ENCODE measurements at regions of chr10 and their contacts with region 1.

Region 1: DNA sequence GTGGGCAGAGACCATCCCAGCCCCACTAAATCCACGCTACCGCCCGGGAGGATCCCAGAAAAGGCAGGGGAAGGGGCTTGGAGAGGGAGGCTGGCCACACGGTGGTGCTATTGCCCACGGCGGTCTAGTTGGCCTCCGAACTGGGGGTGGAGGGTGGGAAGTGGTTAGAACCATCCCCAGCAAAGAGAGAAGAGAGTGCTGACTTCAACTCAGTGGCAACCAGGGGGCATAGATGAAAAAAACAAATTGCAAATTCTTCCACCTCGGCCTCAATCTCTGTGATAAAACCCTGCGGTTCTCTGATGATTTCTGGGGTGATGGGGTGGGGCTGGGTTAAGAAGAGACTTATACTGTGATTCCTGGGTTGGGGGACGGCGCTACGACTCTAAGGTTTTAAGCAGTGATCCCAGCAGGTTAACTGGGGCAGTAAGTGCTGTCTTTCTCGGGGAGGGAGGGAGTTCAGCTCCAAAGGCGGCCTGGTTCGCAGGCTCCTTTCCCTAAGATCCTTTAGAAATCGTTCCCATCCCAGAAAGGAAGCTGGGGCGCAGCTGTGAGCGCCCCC is 154.5 kb upstream of the LYZL2 start:
- DNase-seq: peak; percentile 64 to 93 (median 87)
- ATAC-seq: peak; percentile 88
- H3K4me3 ChIP-seq: peak overlapping the region; percentile 55 to 80
- H3K4me3 Mint-ChIP-seq: peak overlapping the region; percentile 84
- H3K27ac ChIP-seq: peak overlapping the region; percentile 64 to 73
- H3K27ac Mint-ChIP-seq: peak overlapping the region; percentile 93
- H3K4me1 ChIP-seq: peaks cover 3% of the 10 kb centered on the region
- H3K4me1 Mint-ChIP-seq: peaks cover 27% of the 10 kb centered on the region
- H3K27me3 ChIP-seq: no peaks in the 10 kb centered on the region
- H3K27me3 Mint-ChIP-seq: no peaks in the 10 kb centered on the region
- CTCF ChIP-seq: peak; percentile 85

Region 2: GRCh38 chr10:30510169-30510930 is 273.7 kb before region 1 on chr10:
- CTCF ChIA-PET with region 1: no interaction called
- POLR2A ChIA-PET with region 1: no interaction called
- intact Hi-C with region 1: no loop called
- DNase-seq: peak in 2 of 9 experiments; percentile 52 to 53
- ATAC-seq: peak; percentile 51
- H3K4me3 ChIP-seq: no peak overlapping the region
- H3K4me3 Mint-ChIP-seq: no peak overlapping the region
- H3K27ac ChIP-seq: no peak overlapping the region
- H3K27ac Mint-ChIP-seq: no peak overlapping the region
- H3K4me1 ChIP-seq: no peaks in the 10 kb centered on the region
- H3K4me1 Mint-ChIP-seq: peaks cover 13% of the 10 kb centered on the region
- H3K27me3 ChIP-seq: no peaks in the 10 kb centered on the region
- H3K27me3 Mint-ChIP-seq: no peaks in the 10 kb centered on the region
- CTCF ChIP-seq: no peak

Region 3: DNA sequence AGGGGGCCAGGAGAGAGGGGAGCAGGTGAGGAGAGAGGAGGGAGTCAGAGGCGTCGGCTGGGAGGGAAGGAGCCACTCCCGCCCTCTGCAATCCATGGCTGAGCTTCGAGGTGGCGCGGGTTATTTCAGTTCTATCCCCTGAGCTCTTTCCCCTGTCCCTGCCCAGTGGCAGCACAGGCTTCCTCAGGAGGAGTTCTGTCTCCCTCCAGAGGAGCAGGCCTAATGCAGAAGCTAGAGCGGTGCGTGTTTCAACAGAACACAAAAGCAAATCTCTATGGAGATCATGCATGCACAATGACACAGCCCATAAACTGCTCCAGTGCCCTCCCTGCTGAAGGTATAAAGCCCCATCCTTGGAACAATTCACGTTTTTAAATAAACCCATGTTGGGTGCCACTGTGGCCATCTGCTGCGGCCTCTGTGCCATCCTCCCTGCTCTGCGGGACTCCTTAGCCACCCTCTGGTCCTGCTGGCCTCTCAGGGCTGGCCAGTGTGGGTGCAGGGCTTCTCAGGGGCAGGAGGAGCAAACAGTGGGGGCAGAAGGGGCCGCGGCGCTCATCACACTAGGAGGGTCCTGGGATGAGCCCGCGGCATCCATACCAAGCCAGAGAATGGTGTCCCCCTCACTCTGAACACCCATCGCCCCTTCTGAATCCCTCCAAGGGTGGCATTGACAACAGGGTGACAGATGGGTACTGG is 38.1 kb after region 1 on chr10:
- CTCF ChIA-PET with region 1: interaction called, 4 read pairs
- POLR2A ChIA-PET with region 1: no interaction called
- intact Hi-C with region 1: loop called in 1 of 2 experiments (anchors 1 kb)
- DNase-seq: no peak
- ATAC-seq: no peak
- H3K4me3 ChIP-seq: no peak overlapping the region
- H3K4me3 Mint-ChIP-seq: no peak overlapping the region
- H3K27ac ChIP-seq: no peak overlapping the region
- H3K27ac Mint-ChIP-seq: no peak overlapping the region
- H3K4me1 ChIP-seq: no peaks in the 10 kb centered on the region
- H3K4me1 Mint-ChIP-seq: peaks cover 3% of the 10 kb centered on the region
- H3K27me3 ChIP-seq: no peaks in the 10 kb centered on the region
- H3K27me3 Mint-ChIP-seq: peaks cover 7% of the 10 kb centered on the region
- CTCF ChIP-seq: no peak

Region 4: DNA sequence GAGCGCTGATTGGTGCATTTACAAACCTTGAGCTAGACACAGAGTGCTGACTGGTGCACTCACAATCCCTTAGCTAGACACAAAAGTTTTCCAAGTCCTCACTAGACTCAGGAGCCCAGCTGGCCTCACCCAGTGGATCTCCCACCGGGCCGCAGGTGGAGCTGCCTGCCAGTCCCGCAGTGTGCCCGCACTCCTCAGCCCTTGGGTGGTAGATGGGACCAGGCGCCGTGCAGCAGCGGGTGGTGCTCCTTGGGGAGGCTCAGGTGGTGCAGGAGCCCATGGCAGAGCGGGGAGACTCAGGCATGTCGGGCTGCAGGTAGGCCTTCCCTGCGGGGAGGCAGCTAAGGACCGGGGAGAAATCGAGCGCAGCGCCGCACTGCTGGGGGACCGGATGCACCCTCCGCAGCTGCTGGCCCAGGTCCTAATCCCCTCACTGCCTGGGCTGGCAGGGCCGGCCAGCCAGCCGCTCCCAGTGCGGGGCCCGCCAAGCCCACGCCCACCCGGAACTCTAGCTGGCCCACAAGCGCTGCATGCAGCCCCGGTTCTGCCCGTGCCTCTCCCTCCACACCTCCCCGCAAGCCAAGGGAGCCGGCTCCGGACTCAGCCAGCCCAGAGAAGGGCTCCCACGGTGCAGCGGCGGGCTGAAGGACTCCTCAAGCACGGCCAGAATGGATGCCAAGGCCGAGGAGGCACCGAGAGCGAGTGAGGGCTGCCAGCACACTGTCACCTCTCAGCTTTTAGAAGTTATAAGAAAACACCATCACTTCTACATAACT is 118.8 kb after region 1 on chr10:
- CTCF ChIA-PET with region 1: no interaction called
- POLR2A ChIA-PET with region 1: no interaction called
- intact Hi-C with region 1: no loop called
- DNase-seq: no peak
- ATAC-seq: no peak
- H3K4me3 ChIP-seq: no peak overlapping the region
- H3K4me3 Mint-ChIP-seq: no peak overlapping the region
- H3K27ac ChIP-seq: no peak overlapping the region
- H3K27ac Mint-ChIP-seq: no peak overlapping the region
- H3K4me1 ChIP-seq: no peaks in the 10 kb centered on the region
- H3K4me1 Mint-ChIP-seq: no peaks in the 10 kb centered on the region
- H3K27me3 ChIP-seq: no peaks in the 10 kb centered on the region
- H3K27me3 Mint-ChIP-seq: no peaks in the 10 kb centered on the region
- CTCF ChIP-seq: no peak

Region 5: GRCh38 chr10:31083765-31084184 is 299.8 kb after region 1 on chr10:
- CTCF ChIA-PET with region 1: interaction called, 15 read pairs
- POLR2A ChIA-PET with region 1: no interaction called
- intact Hi-C with region 1: loop called (anchors 1 to 2 kb)
- DNase-seq: peak; percentile 19 to 73 (median 50)
- ATAC-seq: peak; percentile 75
- H3K4me3 ChIP-seq: no peak overlapping the region
- H3K4me3 Mint-ChIP-seq: no peak overlapping the region
- H3K27ac ChIP-seq: no peak overlapping the region
- H3K27ac Mint-ChIP-seq: no peak overlapping the region
- H3K4me1 ChIP-seq: no peaks in the 10 kb centered on the region
- H3K4me1 Mint-ChIP-seq: peaks cover 4% of the 10 kb centered on the region
- H3K27me3 ChIP-seq: no peaks in the 10 kb centered on the region
- H3K27me3 Mint-ChIP-seq: no peaks in the 10 kb centered on the region
- CTCF ChIP-seq: no peak

Region 6: DNA sequence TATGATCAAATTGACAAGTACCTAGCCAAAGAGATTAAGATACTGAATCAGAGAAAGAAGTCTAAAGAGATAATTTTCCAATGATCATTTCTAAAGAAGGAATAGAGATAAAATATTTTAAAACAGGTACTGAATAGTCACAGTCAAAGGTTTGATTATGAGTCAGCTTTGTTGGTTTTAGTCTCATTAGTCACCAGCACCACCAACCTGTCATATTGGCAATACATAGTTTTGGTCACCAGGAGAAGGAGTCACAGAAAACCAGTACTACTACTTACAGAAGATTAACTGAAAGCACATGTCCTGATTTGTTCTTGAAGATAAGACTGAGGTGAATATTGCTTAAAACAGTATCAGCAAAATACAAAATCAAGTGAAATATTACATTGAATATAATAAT is 569.6 kb after region 1 on chr10:
- CTCF ChIA-PET with region 1: no interaction called
- POLR2A ChIA-PET with region 1: no interaction called
- intact Hi-C with region 1: loop called in 1 of 2 experiments (anchors 1 kb)
- DNase-seq: peak in 3 of 9 experiments; percentile 31 to 53 (median 39)
- ATAC-seq: peak; percentile 87
- H3K4me3 ChIP-seq: no peak overlapping the region
- H3K4me3 Mint-ChIP-seq: no peak overlapping the region
- H3K27ac ChIP-seq: no peak overlapping the region
- H3K27ac Mint-ChIP-seq: no peak overlapping the region
- H3K4me1 ChIP-seq: peaks cover 9% of the 10 kb centered on the region
- H3K4me1 Mint-ChIP-seq: peaks cover 63% of the 10 kb centered on the region
- H3K27me3 ChIP-seq: no peaks in the 10 kb centered on the region
- H3K27me3 Mint-ChIP-seq: no peaks in the 10 kb centered on the region
- CTCF ChIP-seq: no peak

Region 7: DNA sequence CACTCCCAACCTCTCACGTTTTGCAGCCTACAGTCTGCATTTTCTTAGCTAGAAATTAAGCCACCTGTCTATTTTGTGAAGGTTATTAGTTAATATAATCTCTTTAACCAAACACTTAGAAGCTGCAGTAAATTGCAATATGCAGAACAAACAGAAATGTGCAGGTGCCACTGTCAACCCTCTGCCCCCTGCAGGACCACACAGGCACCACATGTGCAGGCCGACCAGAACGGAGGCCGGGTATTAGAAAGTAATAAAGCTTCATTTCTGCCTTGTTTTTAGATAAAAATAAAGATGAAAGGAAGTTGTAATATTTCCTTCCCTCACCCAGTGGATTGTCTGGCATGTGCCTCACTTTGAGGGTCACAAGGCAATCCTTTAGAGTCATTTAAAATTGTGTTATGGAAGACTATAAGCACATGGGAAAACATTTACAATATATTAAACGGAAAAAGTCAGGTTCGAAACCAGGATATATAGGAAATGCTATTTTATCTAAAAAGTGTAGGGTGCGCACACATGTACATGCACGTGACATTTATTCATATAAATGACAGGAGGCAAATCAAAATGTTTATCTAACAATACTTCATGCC is 986.4 kb after region 1 on chr10:
- CTCF ChIA-PET with region 1: interaction called, 27 read pairs
- POLR2A ChIA-PET with region 1: interaction called, 3 read pairs
- intact Hi-C with region 1: loop called (anchors 1 to 2 kb)
- DNase-seq: peak; percentile 43 to 74 (median 62)
- ATAC-seq: peak; percentile 97
- H3K4me3 ChIP-seq: no peak overlapping the region
- H3K4me3 Mint-ChIP-seq: no peak overlapping the region
- H3K27ac ChIP-seq: no peak overlapping the region
- H3K27ac Mint-ChIP-seq: no peak overlapping the region
- H3K4me1 ChIP-seq: no peaks in the 10 kb centered on the region
- H3K4me1 Mint-ChIP-seq: no peaks in the 10 kb centered on the region
- H3K27me3 ChIP-seq: no peaks in the 10 kb centered on the region
- H3K27me3 Mint-ChIP-seq: no peaks in the 10 kb centered on the region
- CTCF ChIP-seq: peak; percentile 89

Region 8: DNA sequence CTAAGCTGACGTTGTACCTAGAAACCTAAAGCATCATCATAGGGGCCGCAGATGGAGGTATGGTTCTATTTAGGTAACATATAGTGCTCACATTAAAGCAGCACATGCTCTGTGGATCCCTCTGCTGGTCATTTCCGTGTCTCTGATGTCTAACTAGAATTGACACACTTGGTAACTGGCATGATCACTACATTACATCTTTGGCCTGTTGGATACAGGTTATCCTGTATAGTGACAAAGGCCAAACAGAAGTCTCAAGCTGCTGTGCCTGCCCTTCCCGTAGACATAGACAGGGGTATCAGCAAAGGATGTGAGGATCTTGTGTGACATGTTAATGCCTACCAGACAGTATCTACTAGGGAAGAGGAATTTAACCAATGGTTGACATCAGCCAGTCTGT is 1221.0 kb after region 1 on chr10:
- CTCF ChIA-PET with region 1: no interaction called
- POLR2A ChIA-PET with region 1: no interaction called
- intact Hi-C with region 1: loop called in 1 of 2 experiments (anchors 5 kb)
- DNase-seq: peak in 5 of 9 experiments; percentile 16 to 69 (median 39)
- ATAC-seq: peak; percentile 80
- H3K4me3 ChIP-seq: no peak overlapping the region
- H3K4me3 Mint-ChIP-seq: no peak overlapping the region
- H3K27ac ChIP-seq: no peak overlapping the region
- H3K27ac Mint-ChIP-seq: peak overlapping the region; percentile 47
- H3K4me1 ChIP-seq: no peaks in the 10 kb centered on the region
- H3K4me1 Mint-ChIP-seq: peaks cover 4% of the 10 kb centered on the region
- H3K27me3 ChIP-seq: no peaks in the 10 kb centered on the region
- H3K27me3 Mint-ChIP-seq: no peaks in the 10 kb centered on the region
- CTCF ChIP-seq: peak; percentile 55

Measured in CD8-positive, alpha-beta T cell (primary cell).